H1 (cell line): ENCODE measurements at regions of chr11 and their contacts with region 1.

Region 1: DNA sequence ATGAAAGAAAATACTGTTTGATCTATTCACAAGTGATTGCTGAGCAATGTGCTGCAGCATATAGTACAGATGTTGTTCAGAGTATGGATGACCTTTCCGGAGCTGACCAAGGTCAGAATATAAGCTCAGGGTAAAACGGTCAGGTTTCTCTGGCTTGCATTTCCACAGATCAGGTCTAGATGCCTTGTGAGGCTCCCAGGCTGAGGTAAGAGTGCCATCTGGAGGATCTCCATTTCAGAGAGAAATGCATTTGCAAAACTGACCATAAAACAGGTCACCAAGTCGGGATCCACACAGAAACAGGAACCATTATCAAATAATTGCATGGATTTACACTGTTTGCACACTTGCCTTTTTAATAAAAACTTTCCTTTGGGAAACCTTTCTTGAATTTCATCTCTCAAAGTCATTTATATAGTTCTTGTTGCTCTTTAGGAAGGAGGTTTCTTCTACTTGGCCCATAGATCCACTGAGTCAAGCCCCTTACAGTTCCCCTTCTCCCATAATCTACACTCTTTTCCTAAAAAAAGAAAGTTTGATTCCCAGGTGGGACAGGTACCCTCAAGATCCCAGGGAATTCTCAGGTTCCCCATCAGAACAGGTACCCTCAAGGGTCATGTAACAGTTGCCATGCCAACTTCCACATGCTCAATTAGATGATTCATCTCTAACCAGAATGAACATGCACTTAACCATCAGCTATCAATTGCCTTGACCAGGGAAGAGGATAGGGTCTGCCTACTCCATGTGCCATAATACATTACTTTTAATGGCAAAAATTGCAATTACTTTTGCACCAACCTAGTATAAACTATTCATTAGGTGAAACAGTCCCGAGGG is 25.0 kb upstream of the TMPRSS5 start:
- DNase-seq: peak in 1 of 2 experiments; percentile 60
- H3K4me3 ChIP-seq: no peak overlapping the region
- H3K27ac ChIP-seq: no peak overlapping the region
- H3K4me1 ChIP-seq: no peaks in the 10 kb centered on the region
- H3K27me3 ChIP-seq: no peaks in the 10 kb centered on the region
- CTCF ChIP-seq: peak; percentile 11 to 77 (median 69)
- EP300 ChIP-seq: no peak
- POLR2A ChIP-seq: no peak
- RAD21 ChIP-seq: peak; percentile 97 to 98

Region 2: GRCh38 chr11:113305440-113306336 is 425.4 kb before region 1 on chr11:
- CTCF ChIA-PET with region 1: interaction called, 64 read pairs
- POLR2A ChIA-PET with region 1: no interaction called
- DNase-seq: peak; percentile 41 to 85
- H3K4me3 ChIP-seq: no peak overlapping the region
- H3K27ac ChIP-seq: no peak overlapping the region
- H3K4me1 ChIP-seq: no peaks in the 10 kb centered on the region
- H3K27me3 ChIP-seq: no peaks in the 10 kb centered on the region
- CTCF ChIP-seq: peak; percentile 95 to 98 (median 97)
- EP300 ChIP-seq: no peak
- POLR2A ChIP-seq: no peak
- RAD21 ChIP-seq: peak; percentile 99 to 100

Region 3: GRCh38 chr11:113526521-113526920 is 204.6 kb before region 1 on chr11:
- CTCF ChIA-PET with region 1: interaction called, 16 read pairs
- POLR2A ChIA-PET with region 1: no interaction called
- DNase-seq: no peak
- H3K4me3 ChIP-seq: no peak overlapping the region
- H3K27ac ChIP-seq: no peak overlapping the region
- H3K4me1 ChIP-seq: no peaks in the 10 kb centered on the region; a peak in 1 of 7 replicates
- H3K27me3 ChIP-seq: no peaks in the 10 kb centered on the region; a peak in 1 of 7 replicates
- CTCF ChIP-seq: no peak
- EP300 ChIP-seq: no peak
- POLR2A ChIP-seq: no peak
- RAD21 ChIP-seq: no peak

Region 4: GRCh38 chr11:113532697-113533424 is 198.2 kb before region 1 on chr11:
- CTCF ChIA-PET with region 1: interaction called, 25 read pairs
- POLR2A ChIA-PET with region 1: no interaction called
- DNase-seq: peak; percentile 44 to 91
- H3K4me3 ChIP-seq: no peak overlapping the region
- H3K27ac ChIP-seq: no peak overlapping the region
- H3K4me1 ChIP-seq: peaks cover 0 to under 1% (median 0%) of the 10 kb centered on the region in 4 experiments; a peak in 2 of 7 replicates
- H3K27me3 ChIP-seq: no peaks in the 10 kb centered on the region; a peak in 1 of 7 replicates
- CTCF ChIP-seq: peak; percentile 77 to 83 (median 78)
- EP300 ChIP-seq: no peak
- POLR2A ChIP-seq: no peak
- RAD21 ChIP-seq: peak; percentile 90

Region 5: GRCh38 chr11:113553235-113553634 is 177.9 kb before region 1 on chr11:
- CTCF ChIA-PET with region 1: interaction called, 13 read pairs
- POLR2A ChIA-PET with region 1: no interaction called
- DNase-seq: peak in 1 of 2 experiments; percentile 49
- H3K4me3 ChIP-seq: no peak overlapping the region
- H3K27ac ChIP-seq: no peak overlapping the region
- H3K4me1 ChIP-seq: peaks cover 0 to 7% (median 5%) of the 10 kb centered on the region in 4 experiments; a peak in 3 of 7 replicates
- H3K27me3 ChIP-seq: no peaks in the 10 kb centered on the region
- CTCF ChIP-seq: no peak
- EP300 ChIP-seq: no peak
- POLR2A ChIP-seq: no peak
- RAD21 ChIP-seq: no peak

Region 6: GRCh38 chr11:113587308-113587739 is 143.8 kb before region 1 on chr11:
- CTCF ChIA-PET with region 1: interaction called, 19 read pairs
- POLR2A ChIA-PET with region 1: no interaction called
- DNase-seq: no peak
- H3K4me3 ChIP-seq: no peak overlapping the region
- H3K27ac ChIP-seq: no peak overlapping the region
- H3K4me1 ChIP-seq: no peaks in the 10 kb centered on the region
- H3K27me3 ChIP-seq: no peaks in the 10 kb centered on the region
- CTCF ChIP-seq: peak; percentile 17 to 47 (median 42)
- EP300 ChIP-seq: no peak
- POLR2A ChIP-seq: no peak
- RAD21 ChIP-seq: peak; percentile 71 to 76

Region 7: GRCh38 chr11:113710989-113711388 is 20.1 kb before region 1 on chr11:
- CTCF ChIA-PET with region 1: interaction called, 12 read pairs
- POLR2A ChIA-PET with region 1: interaction called, 8 read pairs
- DNase-seq: no peak
- H3K4me3 ChIP-seq: no peak overlapping the region
- H3K27ac ChIP-seq: no peak overlapping the region
- H3K4me1 ChIP-seq: peaks cover 0 to 5% (median 2%) of the 10 kb centered on the region in 4 experiments; a peak in 4 of 7 replicates
- H3K27me3 ChIP-seq: no peaks in the 10 kb centered on the region
- CTCF ChIP-seq: no peak
- EP300 ChIP-seq: no peak
- POLR2A ChIP-seq: no peak
- RAD21 ChIP-seq: no peak

Region 8: DNA sequence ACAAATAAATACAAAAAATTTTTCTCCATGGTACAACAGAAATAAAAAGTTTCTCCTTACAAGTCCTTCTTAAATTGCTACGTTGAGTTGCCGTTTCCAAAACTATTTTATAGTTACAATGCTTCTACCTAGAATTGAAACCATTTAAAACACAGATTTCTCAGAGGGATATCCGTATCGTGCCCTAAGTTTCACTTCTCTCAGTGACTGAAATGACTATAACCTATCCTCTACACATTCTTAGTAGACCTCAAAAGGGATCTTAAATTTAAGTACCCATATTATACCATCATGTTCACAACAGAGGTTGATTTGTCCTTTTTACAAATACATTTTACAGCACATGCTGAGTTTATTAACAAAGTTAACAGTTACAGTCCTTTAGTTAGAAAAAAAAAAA is 100.2 kb after region 1 on chr11:
- CTCF ChIA-PET with region 1: no interaction called
- POLR2A ChIA-PET with region 1: no interaction called
- DNase-seq: no peak
- H3K4me3 ChIP-seq: no peak overlapping the region
- H3K27ac ChIP-seq: no peak overlapping the region
- H3K4me1 ChIP-seq: no peaks in the 10 kb centered on the region
- H3K27me3 ChIP-seq: no peaks in the 10 kb centered on the region
- CTCF ChIP-seq: no peak
- EP300 ChIP-seq: no peak
- POLR2A ChIP-seq: no peak
- RAD21 ChIP-seq: no peak